WTC11 (cell line): ENCODE measurements at regions of chr2 and their contacts with region 1.

Region 1: DNA sequence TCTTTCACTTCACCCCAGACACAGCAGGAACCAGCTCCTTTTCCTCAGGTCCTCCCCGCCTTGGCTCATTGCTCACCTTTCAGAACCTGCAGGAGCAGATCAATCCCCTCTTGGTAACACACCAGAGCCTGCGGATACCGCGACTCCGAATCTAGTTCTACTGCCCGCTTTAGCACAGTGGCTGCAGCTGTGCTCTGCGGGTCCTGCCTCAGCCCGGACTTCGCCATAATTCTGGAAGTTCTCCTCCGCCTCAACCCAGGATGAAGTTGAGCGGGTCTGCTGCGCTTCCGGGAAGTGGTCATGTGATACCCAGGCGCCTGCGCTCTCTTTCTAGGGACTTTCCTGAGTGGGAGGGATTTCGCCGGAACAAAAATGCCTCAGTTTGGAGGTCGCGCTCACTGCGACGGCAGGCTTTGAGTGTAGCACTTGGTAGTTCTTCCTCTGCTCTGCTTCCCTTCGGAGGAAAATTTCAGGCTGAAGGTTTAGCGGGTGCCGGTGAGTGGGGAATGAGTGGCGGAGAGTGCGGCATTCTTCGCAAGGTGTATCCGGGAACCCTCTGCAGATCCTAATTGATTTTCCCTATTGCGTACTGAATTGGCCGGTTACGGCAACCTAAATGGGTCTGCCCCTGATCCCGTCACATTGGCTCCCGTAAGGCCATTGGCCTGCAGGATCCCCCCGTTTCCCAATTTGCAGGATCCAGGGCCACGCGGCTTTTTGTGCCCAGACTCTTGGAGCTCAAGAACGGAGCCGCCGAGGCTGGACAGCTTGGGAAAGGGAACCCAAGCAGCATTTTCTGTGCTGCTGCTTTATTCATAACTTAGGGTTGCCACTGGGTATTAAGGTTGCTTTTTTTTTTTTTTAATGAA is at the starts of genes MITD1 and MRPL30:
- DNase-seq: peak; percentile 85
- ATAC-seq: peak; percentile 85
- H3K4me3 Mint-ChIP-seq: peak within 1 kb of the TSS; percentile 99
- H3K27ac Mint-ChIP-seq: peak within 1 kb of the TSS; percentile 99
- H3K4me1 Mint-ChIP-seq: peaks cover 22% of the 10 kb centered on the region
- H3K27me3 Mint-ChIP-seq: no peaks in the 10 kb centered on the region
- CTCF ChIP-seq: no peak
- total RNA-seq, gene MITD1: 33.1 to 37.1 TPM (median 34.7 TPM) in 3 replicates
- total RNA-seq, gene MRPL30: 28.7 to 34.9 TPM (median 33.4 TPM) in 3 replicates

Region 2: GRCh38 chr2:99032786-99033185 is 148.2 kb before region 1 on chr2:
- CTCF ChIA-PET with region 1: no interaction called
- POLR2A ChIA-PET with region 1: no interaction called
- DNase-seq: no peak
- ATAC-seq: no peak
- H3K4me3 Mint-ChIP-seq: no peak overlapping the region
- H3K27ac Mint-ChIP-seq: no peak overlapping the region
- H3K4me1 Mint-ChIP-seq: peaks cover 17% of the 10 kb centered on the region
- H3K27me3 Mint-ChIP-seq: no peaks in the 10 kb centered on the region
- CTCF ChIP-seq: no peak

Region 3: DNA sequence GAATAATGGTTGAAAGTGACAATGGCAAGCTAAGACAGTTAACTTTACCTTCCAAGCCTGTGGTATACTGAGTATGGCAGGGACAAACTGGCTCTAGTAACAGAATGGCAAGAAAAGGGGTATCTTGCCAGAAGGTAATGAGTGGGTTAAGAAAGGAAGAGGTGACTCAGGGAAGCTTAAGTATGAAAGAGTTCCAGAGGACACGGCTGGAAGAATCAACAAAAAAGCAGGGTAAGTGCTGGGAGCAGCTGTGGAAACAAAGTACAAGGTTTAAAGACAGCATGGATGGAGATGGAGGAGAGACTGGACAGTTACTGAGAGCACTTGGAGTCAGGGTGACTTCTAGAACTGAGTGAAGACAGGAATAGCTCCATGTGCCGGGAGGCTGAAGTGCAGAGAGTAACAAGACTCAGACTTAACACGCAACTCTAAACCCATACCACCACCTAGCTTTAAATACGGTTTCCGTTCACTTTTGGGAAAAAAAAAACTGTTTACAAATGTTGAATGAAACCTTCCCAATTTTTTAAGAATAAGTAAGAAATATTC is 239.8 kb after region 1 on chr2:
- CTCF ChIA-PET with region 1: no interaction called
- POLR2A ChIA-PET with region 1: interaction called, 10 read pairs
- DNase-seq: no peak
- ATAC-seq: no peak
- H3K4me3 Mint-ChIP-seq: no peak overlapping the region
- H3K27ac Mint-ChIP-seq: no peak overlapping the region; the same call in 1 of the 2 replicates
- H3K4me1 Mint-ChIP-seq: no peaks in the 10 kb centered on the region
- H3K27me3 Mint-ChIP-seq: no peaks in the 10 kb centered on the region
- CTCF ChIP-seq: no peak